Activated CD8-positive, alpha-beta T cell treated with anti-CD3 and anti-CD28 coated beads for 36 hours (primary cell): ENCODE measurements at regions of chr7 and their contacts with region 1.

Region 1: DNA sequence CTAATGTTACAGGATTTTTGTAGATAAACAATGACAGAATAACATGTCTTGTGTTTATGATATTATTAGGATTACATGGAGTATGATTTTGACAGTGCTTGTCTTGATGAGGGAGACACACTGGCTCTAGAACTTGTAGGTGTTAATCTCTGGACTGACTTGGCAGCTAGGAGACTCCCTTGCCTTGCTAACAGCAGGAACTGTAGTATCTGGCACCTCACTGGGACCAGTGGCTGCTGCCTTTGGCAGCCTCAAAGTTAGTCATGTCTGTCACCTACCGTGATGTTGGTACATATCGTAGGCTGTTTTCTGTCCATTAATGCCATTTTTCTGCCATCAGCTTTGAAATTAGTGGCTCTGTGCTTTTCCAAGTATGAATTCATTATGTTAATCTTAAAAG is 261.5 kb downstream of the CDK14 start:
- DNase-seq: no peak
- ATAC-seq: no peak
- H3K4me3 Mint-ChIP-seq: no peak overlapping the region
- H3K27ac Mint-ChIP-seq: no peak overlapping the region
- H3K4me1 Mint-ChIP-seq: no peaks in the 10 kb centered on the region
- H3K27me3 Mint-ChIP-seq: no peaks in the 10 kb centered on the region
- CTCF ChIP-seq: no peak

Region 2: GRCh38 chr7:90843472-90843871 is 14.1 kb before region 1 on chr7:
- CTCF ChIA-PET with region 1: no interaction called
- POLR2A ChIA-PET with region 1: no interaction called
- intact Hi-C with region 1: loop called (anchors 2 kb)
- DNase-seq: no peak
- ATAC-seq: no peak
- H3K4me3 Mint-ChIP-seq: no peak overlapping the region
- H3K27ac Mint-ChIP-seq: no peak overlapping the region
- H3K4me1 Mint-ChIP-seq: no peaks in the 10 kb centered on the region
- H3K27me3 Mint-ChIP-seq: no peaks in the 10 kb centered on the region
- CTCF ChIP-seq: no peak